ENCODE measurements at regions of chr12 and their contacts with region 1.

Region 1: GRCh38 chr12:112375105-112375504 is 7.1 kb downstream of the HECTD4 start:
- DNase-seq: no peak
- ATAC-seq: no peak
- H3K4me3 ChIP-seq: no peak overlapping the region
- H3K27ac ChIP-seq: no peak overlapping the region
- H3K4me1 ChIP-seq: no peaks in the 10 kb centered on the region
- H3K27me3 ChIP-seq: no peaks in the 10 kb centered on the region
- CTCF ChIP-seq: no peak

Region 2: DNA sequence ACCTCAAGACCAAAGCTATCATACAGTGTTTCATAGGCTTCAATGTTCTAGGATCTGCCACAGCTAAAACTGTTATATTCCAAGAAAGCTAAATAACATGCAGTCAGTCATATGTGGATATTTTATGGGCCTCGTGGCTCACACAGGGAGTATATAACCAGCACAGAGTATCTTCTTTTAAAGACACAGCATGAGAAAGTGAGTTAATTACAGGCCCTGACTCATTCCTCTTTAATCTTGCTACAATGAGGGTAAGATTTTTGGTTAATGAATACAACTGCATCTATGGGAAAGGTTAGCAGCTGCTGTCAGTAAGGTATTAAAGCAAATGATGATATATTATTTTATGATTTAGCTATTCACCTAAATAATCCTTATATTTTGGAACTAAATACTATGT is 138.7 kb before region 1 on chr12:
- intact Hi-C with region 1: no loop called
- DNase-seq: no peak
- ATAC-seq: no peak
- H3K4me3 ChIP-seq: no peak overlapping the region
- H3K27ac ChIP-seq: no peak overlapping the region
- H3K4me1 ChIP-seq: no peaks in the 10 kb centered on the region
- H3K27me3 ChIP-seq: no peaks in the 10 kb centered on the region
- CTCF ChIP-seq: no peak

Region 3: GRCh38 chr12:112294793-112295192 is 80.3 kb before region 1 on chr12:
- intact Hi-C with region 1: loop called in 1 of 3 experiments (anchors 10 kb)
- DNase-seq: no peak
- ATAC-seq: no peak
- H3K4me3 ChIP-seq: no peak overlapping the region
- H3K27ac ChIP-seq: no peak overlapping the region
- H3K4me1 ChIP-seq: no peaks in the 10 kb centered on the region
- H3K27me3 ChIP-seq: no peaks in the 10 kb centered on the region
- CTCF ChIP-seq: no peak

Measured in pancreas (tissue), 10 donors.